ENCODE measurements at regions of chr17 and their contacts with region 1.

Region 1: GRCh38 chr17:49997791-49998703 is 3.0 kb upstream of the DLX3 start:
- DNase-seq: peak; percentile 92
- ATAC-seq: peak; percentile 88
- H3K4me3 ChIP-seq: peak overlapping the region in 1 of 3 experiments; percentile 38; a peak in 1 of 6 replicates
- H3K27ac ChIP-seq: no peak overlapping the region
- H3K4me1 ChIP-seq: peaks cover 45% of the 10 kb centered on the region
- H3K27me3 ChIP-seq: peaks cover 15 to 67% of the 10 kb centered on the region in 2 experiments
- CTCF ChIP-seq: peak; percentile 98
- EP300 ChIP-seq: no peak
- POLR2A ChIP-seq: no peak
- RAD21 ChIP-seq: peak; percentile 98

Region 2: GRCh38 chr17:49861150-49861892 is 136.7 kb before region 1 on chr17:
- CTCF ChIA-PET with region 1: interaction called, 284 read pairs
- POLR2A ChIA-PET with region 1: interaction called, 7 read pairs
- in situ Hi-C with region 1: loop called (anchors 5 kb)
- intact Hi-C with region 1: loop called (anchors 1 kb)
- DNase-seq: peak; percentile 64
- ATAC-seq: peak; percentile 40
- H3K4me3 ChIP-seq: peak overlapping the region in 1 of 3 experiments; percentile 2; a peak in 1 of 6 replicates
- H3K27ac ChIP-seq: no peak overlapping the region
- H3K4me1 ChIP-seq: peaks cover 55% of the 10 kb centered on the region
- H3K27me3 ChIP-seq: peaks cover 0 to 11% of the 10 kb centered on the region in 2 experiments; a peak in 1 of 5 replicates
- CTCF ChIP-seq: peak; percentile 99
- EP300 ChIP-seq: 0 out of 4 replicates have a peak, but pooled peaks of 1 of the 2 experiments have one; percentile 27
- POLR2A ChIP-seq: no peak
- RAD21 ChIP-seq: peak; percentile 98

Region 3: GRCh38 chr17:49880291-49881053 is 117.6 kb before region 1 on chr17:
- CTCF ChIA-PET with region 1: interaction called, 49 read pairs
- POLR2A ChIA-PET with region 1: interaction called, 3 read pairs
- in situ Hi-C with region 1: no loop called
- intact Hi-C with region 1: loop called (anchors 1 kb)
- DNase-seq: peak; percentile 57
- ATAC-seq: peak; percentile 96
- H3K4me3 ChIP-seq: peak overlapping the region in 1 of 3 experiments; percentile 20; a peak in 1 of 6 replicates
- H3K27ac ChIP-seq: no peak overlapping the region
- H3K4me1 ChIP-seq: peaks cover 16% of the 10 kb centered on the region
- H3K27me3 ChIP-seq: peaks cover 2 to 53% of the 10 kb centered on the region in 2 experiments; a peak in 4 of 5 replicates
- CTCF ChIP-seq: peak; percentile 99
- EP300 ChIP-seq: no peak
- POLR2A ChIP-seq: no peak
- RAD21 ChIP-seq: peak; percentile 99

Region 4: DNA sequence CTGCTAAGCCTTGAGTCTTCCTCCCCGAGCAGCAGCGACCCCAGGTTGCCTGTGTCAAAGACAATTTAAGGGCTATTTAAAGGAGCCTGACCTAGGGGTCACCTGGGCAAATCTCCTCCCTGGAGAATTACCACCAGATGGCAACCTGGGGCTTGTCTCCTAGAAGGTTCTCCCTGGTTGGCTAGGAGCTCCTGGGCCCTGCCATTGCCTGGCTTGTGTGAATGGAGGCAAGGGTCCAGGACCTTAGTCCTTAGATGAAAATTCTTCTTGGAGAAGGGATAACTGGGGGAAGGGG is 98.9 kb before region 1 on chr17:
- CTCF ChIA-PET with region 1: interaction called, 55 read pairs
- POLR2A ChIA-PET with region 1: interaction called, 6 read pairs
- in situ Hi-C with region 1: loop called (anchors 5 kb)
- intact Hi-C with region 1: loop called (anchors 1 kb)
- DNase-seq: peak; percentile 66
- ATAC-seq: peak; percentile 76
- H3K4me3 ChIP-seq: no peak overlapping the region
- H3K27ac ChIP-seq: no peak overlapping the region
- H3K4me1 ChIP-seq: peaks cover 36% of the 10 kb centered on the region
- H3K27me3 ChIP-seq: peaks cover 6 to 44% of the 10 kb centered on the region in 2 experiments; a peak in 4 of 5 replicates
- CTCF ChIP-seq: peak; percentile 77
- EP300 ChIP-seq: no peak
- POLR2A ChIP-seq: no peak
- RAD21 ChIP-seq: peak; percentile 74

Region 5: GRCh38 chr17:49952209-49952911 is 45.7 kb before region 1 on chr17:
- CTCF ChIA-PET with region 1: interaction called, 27 read pairs
- POLR2A ChIA-PET with region 1: no interaction called
- in situ Hi-C with region 1: loop called (anchors 5 kb)
- intact Hi-C with region 1: loop called (anchors 5 kb)
- DNase-seq: peak; percentile 78
- ATAC-seq: peak; percentile 95
- H3K4me3 ChIP-seq: no peak overlapping the region
- H3K27ac ChIP-seq: no peak overlapping the region
- H3K4me1 ChIP-seq: peaks cover 22% of the 10 kb centered on the region
- H3K27me3 ChIP-seq: peaks cover 5 to 53% of the 10 kb centered on the region in 2 experiments; a peak in 4 of 5 replicates
- CTCF ChIP-seq: peak; percentile 95
- EP300 ChIP-seq: 0 out of 4 replicates have a peak, but pooled peaks of 1 of the 2 experiments have one; percentile 9
- POLR2A ChIP-seq: no peak
- RAD21 ChIP-seq: peak; percentile 74

Region 6: GRCh38 chr17:50047488-50048126 is 49.6 kb after region 1 on chr17:
- CTCF ChIA-PET with region 1: no interaction called
- POLR2A ChIA-PET with region 1: no interaction called
- in situ Hi-C with region 1: no loop called
- intact Hi-C with region 1: no loop called
- DNase-seq: no peak
- ATAC-seq: no peak
- H3K4me3 ChIP-seq: no peak overlapping the region
- H3K27ac ChIP-seq: no peak overlapping the region
- H3K4me1 ChIP-seq: peaks cover 9% of the 10 kb centered on the region
- H3K27me3 ChIP-seq: peaks cover 4 to 23% of the 10 kb centered on the region in 2 experiments; a peak in 2 of 5 replicates
- CTCF ChIP-seq: no peak
- EP300 ChIP-seq: no peak
- POLR2A ChIP-seq: no peak
- RAD21 ChIP-seq: no peak

Measured in HepG2 (cell line).